ENCODE measurements at regions of chr6 and their contacts with region 1.

Region 1: DNA sequence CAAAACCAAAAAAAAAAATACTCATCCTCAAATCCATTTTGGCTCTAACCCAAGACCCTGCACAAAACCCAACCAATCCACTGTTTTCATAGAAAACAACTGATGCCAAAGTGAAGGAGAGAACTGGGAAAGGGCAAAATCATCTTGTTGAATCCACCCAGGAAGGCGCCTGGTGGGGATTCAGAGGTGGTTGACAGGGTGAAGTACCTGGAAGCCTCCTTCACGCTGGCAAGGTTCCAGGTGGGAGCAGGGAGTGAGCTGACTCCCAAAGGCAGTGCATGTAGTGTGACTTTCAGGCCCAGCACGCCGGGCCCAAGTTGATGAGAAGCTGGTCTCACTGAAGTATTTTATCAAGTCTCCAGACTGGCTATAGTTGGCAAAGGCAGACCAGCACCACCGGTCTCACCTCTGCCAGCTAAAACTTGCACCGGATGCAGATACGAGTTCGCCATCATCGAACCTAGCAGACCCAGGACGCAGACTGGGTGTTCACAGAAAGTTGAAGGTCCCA is 16.5 kb downstream of the PPP1R10 start:
- DNase-seq: no peak
- ATAC-seq: no peak
- H3K4me3 ChIP-seq: no peak overlapping the region
- H3K27ac ChIP-seq: no peak overlapping the region
- H3K4me1 ChIP-seq: peaks cover 0 to 12% of the 10 kb centered on the region in 2 experiments; a peak in 2 of 4 replicates
- H3K27me3 ChIP-seq: no peaks in the 10 kb centered on the region
- CTCF ChIP-seq: no peak
- POLR2A ChIP-seq: no peak
- RAD21 ChIP-seq: no peak

Region 2: GRCh38 chr6:30541515-30542403 is 58.7 kb before region 1 on chr6:
- CTCF ChIA-PET with region 1: interaction called, 17 read pairs
- POLR2A ChIA-PET with region 1: no interaction called
- RAD21 ChIA-PET with region 1: no interaction called
- intact Hi-C with region 1: loop called (anchors 1 kb)
- DNase-seq: peak; percentile 83
- ATAC-seq: peak; percentile 92
- H3K4me3 ChIP-seq: peak overlapping the region; percentile 36 to 47
- H3K27ac ChIP-seq: no peak overlapping the region
- H3K4me1 ChIP-seq: peaks cover 0 to 10% of the 10 kb centered on the region in 2 experiments; a peak in 2 of 4 replicates
- H3K27me3 ChIP-seq: no peaks in the 10 kb centered on the region
- CTCF ChIP-seq: peak; percentile 84 to 99 (median 97)
- POLR2A ChIP-seq: no peak
- RAD21 ChIP-seq: peak; percentile 78

Region 3: DNA sequence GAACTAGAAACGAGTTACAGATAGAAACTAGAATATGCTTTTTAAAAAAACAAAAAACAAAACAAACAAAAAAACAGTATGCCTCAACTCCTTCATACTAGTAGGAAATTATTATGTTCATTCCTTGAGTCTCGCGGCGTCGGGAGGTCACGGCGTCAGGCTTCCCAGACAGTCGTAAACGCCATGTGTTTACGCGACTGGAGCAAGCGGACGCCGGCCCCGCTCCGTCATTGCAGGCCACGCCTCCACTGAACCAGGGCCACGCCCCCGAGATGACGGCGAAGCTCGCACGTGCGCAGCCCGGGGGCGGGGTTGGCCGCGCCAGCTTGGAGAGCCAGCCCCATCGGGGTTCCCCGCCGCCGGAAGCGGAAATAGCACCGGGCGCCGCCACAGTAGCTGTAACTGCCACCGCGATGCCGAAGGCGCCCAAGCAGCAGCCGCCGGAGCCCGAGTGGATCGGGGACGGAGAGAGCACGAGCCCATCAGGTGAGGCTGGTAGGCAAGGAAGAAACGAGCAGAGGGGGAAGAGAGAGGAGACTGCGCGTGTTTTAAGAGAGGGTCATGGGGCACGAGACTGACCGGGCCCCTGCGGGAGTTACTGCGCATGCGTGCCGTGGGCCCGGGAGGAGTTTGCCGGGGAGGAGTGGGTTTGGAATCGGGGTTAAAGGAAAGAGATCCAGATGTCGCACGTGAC is 29.3 kb before region 1 on chr6 and contains the start of gene ABCF1:
- CTCF ChIA-PET with region 1: interaction called, 3 read pairs
- POLR2A ChIA-PET with region 1: interaction called, 12 read pairs
- RAD21 ChIA-PET with region 1: no interaction called
- intact Hi-C with region 1: no loop called
- DNase-seq: peak; percentile 93
- ATAC-seq: peak; percentile 92
- H3K4me3 ChIP-seq: peak within 1 kb of the TSS; percentile 66 to 97
- H3K27ac ChIP-seq: peak within 1 kb of the TSS; percentile 72
- H3K4me1 ChIP-seq: peaks cover 9 to 29% of the 10 kb centered on the region in 2 experiments
- H3K27me3 ChIP-seq: no peaks in the 10 kb centered on the region
- CTCF ChIP-seq: no peak
- POLR2A ChIP-seq: peak; percentile 48
- RAD21 ChIP-seq: no peak
- total RNA-seq, gene ABCF1: 53.3 TPM

Measured in HCT116 (cell line).